Activated B cell treated with CpG ODN at 0.5 μM for 24 hours (primary cell): ENCODE measurements at regions of chr5 and their contacts with region 1.

Region 1: DNA sequence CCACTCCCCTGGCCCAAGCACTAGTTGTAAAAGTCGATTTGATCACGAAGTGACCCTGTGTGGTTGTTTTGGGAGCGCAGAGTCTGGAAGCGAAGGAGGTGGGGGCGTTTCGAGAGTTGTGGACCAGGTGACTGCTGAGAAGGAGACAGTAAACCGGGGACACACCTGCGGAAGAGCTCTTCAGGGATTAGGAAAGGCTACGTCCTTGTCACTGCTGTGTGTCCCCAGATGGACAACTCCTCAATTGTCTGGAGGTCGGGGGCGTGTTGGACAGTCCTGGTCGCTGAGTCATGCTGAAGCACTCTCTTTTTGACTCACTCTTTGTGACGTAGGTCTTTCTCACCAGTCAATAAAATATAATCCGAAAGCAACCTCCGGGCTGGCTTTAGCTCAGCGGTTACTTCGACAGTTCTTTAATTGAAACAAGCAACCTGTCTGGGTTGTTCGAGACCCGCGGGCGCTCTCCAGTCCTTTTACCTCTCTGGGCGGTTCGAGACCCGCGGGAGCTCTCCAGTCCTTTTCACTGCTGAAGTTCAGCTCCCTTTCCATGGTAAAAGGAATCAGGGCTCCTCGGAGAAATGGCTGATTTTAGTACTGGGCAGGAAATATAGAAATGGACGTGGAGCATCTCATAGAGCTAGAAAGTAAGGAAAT is 10.8 kb downstream of the ZMAT2 start:
- DNase-seq: peak; percentile 60
- ATAC-seq: peak; percentile 85
- H3K4me3 Mint-ChIP-seq: peak overlapping the region; percentile 93
- H3K27ac Mint-ChIP-seq: peak overlapping the region; percentile 90
- H3K4me1 Mint-ChIP-seq: peaks cover 18% of the 10 kb centered on the region
- H3K27me3 Mint-ChIP-seq: peaks cover 3% of the 10 kb centered on the region
- CTCF ChIP-seq: no peak

Region 2: GRCh38 chr5:138832218-138832617 is 1878.8 kb before region 1 on chr5:
- CTCF ChIA-PET with region 1: no interaction called
- POLR2A ChIA-PET with region 1: no interaction called
- intact Hi-C with region 1: no loop called
- DNase-seq: no peak
- ATAC-seq: no peak
- H3K4me3 Mint-ChIP-seq: no peak overlapping the region
- H3K27ac Mint-ChIP-seq: no peak overlapping the region
- H3K4me1 Mint-ChIP-seq: peaks cover 2% of the 10 kb centered on the region
- H3K27me3 Mint-ChIP-seq: no peaks in the 10 kb centered on the region
- CTCF ChIP-seq: no peak

Region 3: DNA sequence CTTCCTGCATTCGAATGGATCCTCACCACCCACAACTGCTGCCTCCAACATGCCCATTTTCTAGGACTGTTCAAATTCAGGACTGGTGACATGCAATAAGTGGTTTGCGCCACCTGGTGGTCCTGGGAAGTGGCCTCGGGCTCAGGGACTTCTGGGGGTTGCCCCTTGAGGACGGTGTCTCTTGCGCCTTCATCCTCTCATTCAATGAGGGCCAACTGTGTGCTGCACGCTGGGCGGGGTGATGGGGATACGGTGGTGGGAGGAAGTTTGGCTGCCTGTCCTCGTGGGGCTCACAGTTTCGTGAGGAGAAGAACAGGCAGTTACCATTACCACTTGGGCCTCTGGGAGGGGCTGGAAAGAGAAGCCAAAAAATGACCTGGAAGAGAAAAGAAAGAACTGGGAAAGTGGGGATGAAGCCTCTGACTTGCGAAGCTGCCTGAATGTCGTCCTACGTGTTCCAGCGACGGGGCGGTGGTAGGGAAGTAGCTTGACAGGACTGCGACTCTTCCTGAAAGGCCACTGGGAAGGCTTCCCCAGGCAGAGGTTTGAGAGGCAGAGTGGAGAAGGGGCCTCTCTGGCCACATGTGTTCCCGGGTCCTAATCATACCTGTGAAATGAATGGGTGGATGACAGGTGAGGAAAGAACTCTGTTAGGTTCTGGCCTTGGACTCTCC is 866.4 kb before region 1 on chr5:
- CTCF ChIA-PET with region 1: no interaction called
- POLR2A ChIA-PET with region 1: no interaction called
- intact Hi-C with region 1: loop called (anchors 10 kb)
- DNase-seq: peak; percentile 57
- ATAC-seq: peak; percentile 40
- H3K4me3 Mint-ChIP-seq: peak overlapping the region; percentile 5
- H3K27ac Mint-ChIP-seq: no peak overlapping the region
- H3K4me1 Mint-ChIP-seq: peaks cover 16% of the 10 kb centered on the region
- H3K27me3 Mint-ChIP-seq: peaks cover 13% of the 10 kb centered on the region
- CTCF ChIP-seq: peak; percentile 61

Region 4: DNA sequence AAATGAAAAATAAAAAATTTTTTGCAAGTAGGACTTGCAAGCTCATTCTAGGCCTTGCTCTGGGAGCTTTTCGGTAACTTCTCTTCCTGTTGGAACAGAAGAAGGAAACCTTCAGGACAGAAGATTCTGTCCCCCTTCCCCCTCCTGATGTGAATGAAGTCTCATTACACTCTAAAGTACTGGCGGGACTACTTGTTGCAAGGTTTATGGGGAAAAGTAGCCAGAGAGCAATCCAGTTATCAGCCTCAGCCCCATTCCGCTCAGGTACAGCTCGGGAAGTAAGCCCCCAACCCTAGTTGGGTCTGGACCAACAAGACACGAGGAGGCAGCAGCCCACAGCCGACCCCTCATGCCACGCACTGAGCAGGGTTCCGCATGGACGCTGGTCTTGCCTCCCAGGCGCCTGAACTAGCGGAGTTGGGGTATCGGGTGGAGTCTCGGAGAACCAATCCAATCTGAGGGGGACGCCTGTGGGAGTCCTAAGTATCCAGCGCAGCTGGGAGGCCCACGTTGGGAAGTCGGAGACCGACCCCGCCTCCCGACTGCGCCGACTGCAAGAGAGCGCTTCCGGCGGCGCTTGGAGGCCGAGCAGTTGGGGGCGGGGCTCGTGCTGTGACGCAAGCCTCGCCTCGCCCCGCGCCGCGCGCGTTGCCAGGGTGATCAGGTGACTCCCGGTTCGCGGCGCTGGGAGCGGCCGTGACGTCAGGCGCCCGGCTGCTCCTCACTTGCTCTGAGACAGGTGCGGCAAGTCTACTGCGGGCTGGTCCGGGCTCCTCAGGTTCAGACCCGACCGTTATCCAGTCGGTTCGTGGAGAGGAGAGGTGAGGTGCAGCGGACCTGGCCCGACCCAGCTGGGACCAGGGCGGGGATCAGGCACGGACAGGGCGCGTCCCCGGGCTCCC is 536.3 kb before region 1 on chr5 and contains the start of gene CYSTM1:
- CTCF ChIA-PET with region 1: no interaction called
- POLR2A ChIA-PET with region 1: no interaction called
- intact Hi-C with region 1: loop called (anchors 10 kb)
- DNase-seq: peak; percentile 96
- ATAC-seq: peak; percentile 83
- H3K4me3 Mint-ChIP-seq: peak within 1 kb of the TSS; percentile 93
- H3K27ac Mint-ChIP-seq: peak within 1 kb of the TSS; percentile 89
- H3K4me1 Mint-ChIP-seq: peaks cover 15% of the 10 kb centered on the region
- H3K27me3 Mint-ChIP-seq: no peaks in the 10 kb centered on the region
- CTCF ChIP-seq: no peak
- total RNA-seq, gene CYSTM1: 20.1 and 23.3 TPM in 2 replicates

Region 5: GRCh38 chr5:140547508-140548299 is 163.3 kb before region 1 on chr5 and contains the start of gene EIF4EBP3:
- CTCF ChIA-PET with region 1: no interaction called
- POLR2A ChIA-PET with region 1: interaction called, 4 read pairs
- intact Hi-C with region 1: loop called (anchors 1 kb)
- DNase-seq: peak; percentile 74
- ATAC-seq: peak; percentile 97
- H3K4me3 Mint-ChIP-seq: peak within 1 kb of the TSS; percentile 86
- H3K27ac Mint-ChIP-seq: peak within 1 kb of the TSS; percentile 95
- H3K4me1 Mint-ChIP-seq: peaks cover 28% of the 10 kb centered on the region
- H3K27me3 Mint-ChIP-seq: no peaks in the 10 kb centered on the region
- CTCF ChIP-seq: no peak
- total RNA-seq, gene EIF4EBP3: 14.4 and 18.2 TPM in 2 replicates

Region 6: GRCh38 chr5:140639148-140639979 is 71.7 kb before region 1 on chr5 and contains the start of gene TMCO6:
- CTCF ChIA-PET with region 1: no interaction called
- POLR2A ChIA-PET with region 1: no interaction called
- intact Hi-C with region 1: loop called (anchors 1 kb)
- DNase-seq: peak; percentile 91
- ATAC-seq: peak; percentile 99
- H3K4me3 Mint-ChIP-seq: peak within 1 kb of the TSS; percentile 92
- H3K27ac Mint-ChIP-seq: peak within 1 kb of the TSS; percentile 98
- H3K4me1 Mint-ChIP-seq: peaks cover 29% of the 10 kb centered on the region
- H3K27me3 Mint-ChIP-seq: no peaks in the 10 kb centered on the region
- CTCF ChIP-seq: no peak
- total RNA-seq, gene TMCO6: 20.1 and 23.3 TPM in 2 replicates

Region 7: GRCh38 chr5:140664359-140665119 is 46.5 kb before region 1 on chr5 and contains the start of gene WDR55:
- CTCF ChIA-PET with region 1: no interaction called
- POLR2A ChIA-PET with region 1: interaction called, 4 read pairs
- intact Hi-C with region 1: loop called (anchors 1 kb)
- DNase-seq: peak; percentile 91
- ATAC-seq: peak; percentile 98
- H3K4me3 Mint-ChIP-seq: peak within 1 kb of the TSS; percentile 97
- H3K27ac Mint-ChIP-seq: peak within 1 kb of the TSS; percentile 95
- H3K4me1 Mint-ChIP-seq: peaks cover 30% of the 10 kb centered on the region
- H3K27me3 Mint-ChIP-seq: no peaks in the 10 kb centered on the region
- CTCF ChIP-seq: no peak
- total RNA-seq, gene WDR55: 33.8 and 36.9 TPM in 2 replicates

Region 8: GRCh38 chr5:140700177-140701144 is 10.6 kb before region 1 on chr5 and contains the start of gene ZMAT2:
- CTCF ChIA-PET with region 1: interaction called, 3 read pairs
- POLR2A ChIA-PET with region 1: interaction called, 23 read pairs
- intact Hi-C with region 1: loop called (anchors 1 kb)
- DNase-seq: peak; percentile 77
- ATAC-seq: peak; percentile 100
- H3K4me3 Mint-ChIP-seq: peak within 1 kb of the TSS; percentile 98
- H3K27ac Mint-ChIP-seq: peak within 1 kb of the TSS; percentile 92
- H3K4me1 Mint-ChIP-seq: peaks cover 25% of the 10 kb centered on the region
- H3K27me3 Mint-ChIP-seq: no peaks in the 10 kb centered on the region
- CTCF ChIP-seq: no peak
- total RNA-seq, gene ZMAT2: 67.8 and 70.2 TPM in 2 replicates